Cardiac septum (tissue), 1 donor: ENCODE measurements at regions of chr15 and their contacts with region 1.

Region 1: DNA sequence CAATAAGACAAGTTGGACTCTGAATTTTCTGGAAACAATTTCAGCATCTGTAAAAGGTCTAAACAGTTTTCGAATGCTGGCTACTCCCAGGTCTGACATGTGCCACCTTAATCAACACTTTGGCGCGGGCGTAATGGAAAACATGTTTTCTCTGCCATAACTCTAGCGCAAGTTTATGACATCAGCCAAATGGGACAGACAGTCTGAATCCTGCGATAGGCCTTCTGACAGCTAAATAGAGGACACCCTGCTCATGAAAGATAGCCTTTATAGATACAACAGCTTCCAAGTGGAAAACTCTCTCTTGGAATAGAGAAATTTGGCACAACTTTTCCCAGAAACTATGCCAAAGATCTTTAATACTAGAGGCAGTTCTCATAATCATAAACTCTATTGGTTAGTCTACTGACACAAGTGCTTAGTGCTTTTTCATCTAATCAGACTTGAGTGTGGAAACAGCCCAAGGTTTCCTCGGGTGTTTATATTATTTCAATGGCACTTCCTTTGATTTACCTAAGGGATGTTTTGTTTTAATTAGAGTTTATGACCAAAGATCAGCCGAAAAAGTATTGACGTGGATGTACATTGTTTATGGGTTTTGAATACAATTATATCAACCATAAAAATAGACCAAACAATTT is 120.1 kb upstream of the DPH6 start:
- DNase-seq: no peak

Region 2: GRCh38 chr15:35507932-35508638 is 157.9 kb before region 1 on chr15:
- intact Hi-C with region 1: no loop called
- DNase-seq: no peak

Region 3: DNA sequence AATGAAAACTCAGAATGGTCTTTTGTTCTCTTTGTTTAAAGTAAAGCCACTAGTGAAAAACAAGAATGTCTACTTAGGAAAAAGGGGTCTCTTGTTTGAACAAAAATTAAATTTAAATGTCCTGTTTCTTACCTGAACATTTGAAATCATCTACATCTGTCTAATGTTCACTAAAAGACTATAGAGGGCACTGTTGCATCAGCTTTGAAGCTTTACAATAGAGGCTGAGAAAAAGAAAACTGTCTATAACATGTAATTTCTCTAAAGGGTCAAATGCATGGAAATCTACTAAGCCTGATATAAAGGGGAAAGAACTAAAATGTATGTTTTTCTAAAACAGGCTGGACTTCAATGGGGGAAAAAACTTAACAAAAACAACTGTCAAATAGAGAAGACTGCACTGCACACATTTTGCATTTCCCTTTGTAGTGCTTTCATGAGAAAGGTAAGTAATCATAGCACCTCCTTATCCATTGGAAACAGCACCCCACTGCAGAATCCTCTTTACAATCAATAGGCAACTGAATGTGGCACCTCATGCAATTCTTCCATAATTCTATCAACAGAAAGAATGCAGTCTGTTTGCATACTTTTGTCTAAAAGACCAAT is 146.4 kb before region 1 on chr15:
- intact Hi-C with region 1: no loop called
- DNase-seq: no peak

Region 4: DNA sequence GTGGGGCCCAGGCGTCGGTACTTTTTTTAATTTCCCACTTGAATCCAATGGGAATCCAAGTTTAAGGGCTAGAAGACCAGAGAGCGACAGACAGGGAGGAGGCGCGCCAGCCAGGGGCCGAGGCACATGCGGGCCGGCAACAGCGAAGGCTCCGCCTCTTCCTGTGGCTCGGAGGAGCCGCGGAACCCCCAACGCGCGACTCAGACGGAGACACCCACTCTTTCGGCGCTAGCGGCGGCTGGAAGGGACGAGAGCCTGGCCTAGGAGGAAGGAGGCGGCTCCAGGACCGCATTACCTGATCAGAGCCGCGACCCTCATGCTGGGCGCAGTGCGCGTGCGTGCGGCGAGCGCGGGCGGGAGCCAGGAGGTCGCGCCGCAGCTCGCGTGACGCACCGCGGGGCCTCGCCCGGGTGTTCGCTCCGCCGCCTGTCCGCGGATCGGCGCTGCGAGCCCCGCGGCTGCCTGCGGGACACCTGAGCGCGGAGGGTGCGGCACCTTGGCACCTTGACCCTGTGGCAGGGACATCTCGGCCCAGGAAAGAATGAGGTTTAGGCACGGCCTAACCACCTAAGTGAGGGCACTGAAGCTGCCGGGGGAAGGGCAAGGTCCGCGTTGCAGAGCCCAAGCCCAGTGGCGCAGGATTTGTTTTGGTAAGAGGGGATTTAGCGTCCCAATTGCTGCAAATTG is 120.0 kb before region 1 on chr15 and contains the start of gene DPH6:
- intact Hi-C with region 1: loop called (anchors 5 kb)
- DNase-seq: peak; percentile 92
- total RNA-seq, gene DPH6: 19.7 TPM

Region 5: DNA sequence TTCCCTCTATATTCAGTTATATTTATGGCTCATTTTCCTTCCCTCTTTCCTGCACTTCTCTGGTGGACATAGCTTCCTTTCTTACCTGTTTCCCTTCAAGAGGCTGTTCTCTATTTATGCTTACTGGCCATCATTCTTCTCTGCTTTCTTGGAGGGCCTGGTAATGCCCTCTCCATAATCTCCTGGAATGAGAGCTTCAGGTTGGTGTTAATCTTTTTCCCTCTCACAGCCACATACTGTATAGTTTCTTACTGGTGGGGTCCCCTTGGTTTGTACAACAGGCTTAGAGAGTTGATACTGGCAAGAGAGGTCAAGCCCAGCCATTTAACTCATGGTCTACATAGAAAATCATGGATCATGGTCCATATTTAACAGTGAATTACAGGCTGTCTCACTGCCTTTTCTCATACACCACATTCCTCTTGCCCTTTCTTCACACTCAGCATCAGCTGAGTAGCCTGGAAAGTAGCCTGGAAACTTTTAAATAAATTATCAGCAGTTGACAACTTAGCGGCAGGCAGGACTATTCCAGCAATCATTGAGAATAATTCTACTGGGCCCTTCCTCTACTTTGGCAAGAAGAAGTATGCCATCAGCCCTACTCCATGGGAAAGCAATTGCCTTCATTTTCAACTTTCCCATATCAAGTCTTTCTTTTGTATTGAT is 82.0 kb before region 1 on chr15:
- intact Hi-C with region 1: loop called (anchors 10 kb)
- DNase-seq: no peak

Region 6: GRCh38 chr15:35690698-35691116 is 24.7 kb after region 1 on chr15:
- intact Hi-C with region 1: loop called (anchors 1 kb)
- DNase-seq: no peak